ENCODE measurements at regions of chr9 and their contacts with region 1.

Region 1: DNA sequence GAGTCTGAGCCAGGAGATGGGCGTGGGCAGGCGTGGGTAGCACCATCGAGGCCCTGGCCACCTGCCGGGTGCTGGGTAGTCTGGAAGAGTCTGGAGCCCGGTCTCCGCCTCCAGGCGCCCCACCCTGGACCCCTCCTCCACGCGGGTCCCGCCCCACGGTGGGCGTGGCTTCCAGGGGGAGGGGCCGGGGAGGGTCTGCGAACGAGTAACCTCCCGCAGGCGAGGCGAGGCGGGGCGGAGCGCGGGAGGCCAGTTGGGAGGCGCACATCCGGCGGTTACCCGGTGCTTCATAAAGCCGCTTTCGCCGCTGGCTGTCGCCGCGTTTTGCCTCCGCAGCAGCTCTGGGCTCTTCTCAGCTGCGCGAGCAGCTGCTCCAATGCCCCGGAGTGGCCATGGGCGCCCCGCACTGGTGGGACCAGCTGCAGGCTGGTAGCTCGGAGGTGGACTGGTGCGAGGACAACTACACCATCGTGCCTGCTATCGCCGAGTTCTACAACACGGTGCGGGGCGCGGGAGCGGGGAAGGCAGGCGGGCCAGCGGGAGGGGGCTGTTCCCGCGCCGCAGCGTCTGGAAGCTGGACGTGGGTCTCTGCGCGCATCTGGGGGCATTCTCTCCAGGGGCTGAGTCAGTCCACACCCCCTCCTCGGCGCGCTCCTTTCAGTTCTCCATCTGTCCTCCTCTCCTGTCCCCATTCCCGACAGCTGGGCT is at the start of gene ACER2:
- DNase-seq: peak; percentile 78
- ATAC-seq: peak; percentile 89
- H3K4me3 ChIP-seq: peak within 1 kb of the TSS; percentile 78 to 88
- H3K27ac ChIP-seq: peak within 1 kb of the TSS; percentile 63; the same call in 1 of the 2 replicates
- H3K4me1 ChIP-seq: peaks cover 9 to 29% of the 10 kb centered on the region in 2 experiments
- H3K27me3 ChIP-seq: no peaks in the 10 kb centered on the region
- CTCF ChIP-seq: peak in 2 of 3 experiments; percentile 8 to 10; a peak in 2 of 6 replicates
- POLR2A ChIP-seq: peak; percentile 80
- RAD21 ChIP-seq: no peak
- total RNA-seq, gene ACER2: 4.3 TPM

Region 2: DNA sequence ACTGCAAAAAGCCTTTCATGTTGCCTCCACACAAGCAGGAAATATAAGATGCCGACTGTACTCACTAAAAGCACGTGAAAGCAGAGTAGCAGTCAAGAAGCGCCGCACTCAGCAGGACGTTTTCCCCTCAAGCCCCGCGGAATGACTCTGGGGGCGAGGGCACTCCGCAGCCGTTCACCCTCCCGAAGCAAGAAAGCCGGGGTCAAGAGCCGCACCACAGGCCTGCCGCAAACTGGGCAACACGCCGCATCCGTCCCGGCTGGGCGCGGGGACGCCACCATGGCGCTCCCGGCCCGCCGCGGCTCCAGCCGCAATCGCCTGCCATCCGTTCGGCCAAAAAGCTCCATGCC is 29.2 kb before region 1 on chr9:
- CTCF ChIA-PET with region 1: no interaction called
- POLR2A ChIA-PET with region 1: interaction called, 3 read pairs
- RAD21 ChIA-PET with region 1: no interaction called
- intact Hi-C with region 1: loop called (anchors 1 kb)
- DNase-seq: no peak
- ATAC-seq: peak; percentile 23
- H3K4me3 ChIP-seq: peak overlapping the region; percentile 91 to 98
- H3K27ac ChIP-seq: peak overlapping the region; percentile 86
- H3K4me1 ChIP-seq: peaks cover 9 to 18% of the 10 kb centered on the region in 2 experiments
- H3K27me3 ChIP-seq: no peaks in the 10 kb centered on the region
- CTCF ChIP-seq: no peak
- POLR2A ChIP-seq: no peak
- RAD21 ChIP-seq: no peak

Region 3: DNA sequence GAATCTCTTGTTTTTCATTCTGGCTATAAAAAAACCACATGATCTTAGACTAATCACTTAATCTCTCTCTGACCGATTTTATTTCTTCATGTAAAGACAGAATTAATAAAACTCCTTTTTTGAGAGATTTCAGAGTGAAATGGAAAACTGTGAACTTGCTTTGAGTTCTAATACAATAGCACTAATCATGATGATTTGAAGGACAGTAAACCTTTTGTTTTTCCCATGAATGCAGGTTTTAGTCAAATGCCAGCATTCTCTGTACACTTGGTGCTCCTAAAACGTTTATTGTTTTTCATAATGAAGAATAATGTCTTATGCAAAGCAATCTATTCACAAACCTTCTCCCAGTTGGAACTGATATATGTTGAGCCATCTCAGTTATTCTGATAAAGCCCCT is 293.1 kb after region 1 on chr9:
- CTCF ChIA-PET with region 1: no interaction called
- POLR2A ChIA-PET with region 1: no interaction called
- RAD21 ChIA-PET with region 1: no interaction called
- intact Hi-C with region 1: no loop called
- DNase-seq: no peak
- ATAC-seq: no peak
- H3K4me3 ChIP-seq: no peak overlapping the region
- H3K27ac ChIP-seq: no peak overlapping the region
- H3K4me1 ChIP-seq: no peaks in the 10 kb centered on the region
- H3K27me3 ChIP-seq: 0 out of 2 replicates have a peak, but pooled peaks cover 3% of the 10 kb centered on the region
- CTCF ChIP-seq: no peak
- POLR2A ChIP-seq: no peak
- RAD21 ChIP-seq: no peak

Region 4: DNA sequence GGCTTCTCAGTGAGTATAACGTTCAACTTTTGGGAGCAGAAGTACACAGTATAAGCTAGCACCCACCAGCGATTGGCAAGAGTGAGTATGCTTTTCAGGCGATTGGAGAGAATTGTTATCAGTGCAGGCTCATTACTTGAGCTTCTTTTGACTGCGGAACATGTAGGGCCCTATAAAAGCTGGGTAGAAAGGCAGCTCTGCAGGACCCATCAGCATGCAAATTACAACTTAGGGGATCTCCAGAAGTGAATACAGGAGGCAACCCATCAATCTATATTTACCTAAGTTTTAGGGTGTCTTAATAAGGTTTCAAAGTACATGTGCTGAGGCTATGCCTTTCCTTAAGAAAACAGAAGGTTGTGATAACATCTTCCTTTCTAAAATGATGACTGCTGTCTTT is 988.5 kb after region 1 on chr9:
- CTCF ChIA-PET with region 1: no interaction called
- POLR2A ChIA-PET with region 1: no interaction called
- RAD21 ChIA-PET with region 1: no interaction called
- intact Hi-C with region 1: no loop called
- DNase-seq: no peak
- ATAC-seq: no peak
- H3K4me3 ChIP-seq: no peak overlapping the region
- H3K27ac ChIP-seq: no peak overlapping the region
- H3K4me1 ChIP-seq: no peaks in the 10 kb centered on the region
- H3K27me3 ChIP-seq: 0 out of 2 replicates have a peak, but pooled peaks cover 10% of the 10 kb centered on the region
- CTCF ChIP-seq: no peak
- POLR2A ChIP-seq: no peak
- RAD21 ChIP-seq: no peak